Heart right ventricle (tissue), 16 donors: ENCODE measurements at regions of chr11 and their contacts with region 1.

Region 1: GRCh38 chr11:100789500-100789899 is 102.4 kb downstream of the ARHGAP42 start:
- DNase-seq: peak; percentile 25 to 46
- ATAC-seq: peak; percentile 44 to 85 (median 68)
- H3K4me3 ChIP-seq: no peak overlapping the region
- H3K27ac ChIP-seq: peak overlapping the region in 3 of 10 donors; percentile 13 to 41 (median 33)
- H3K4me1 ChIP-seq: peaks cover 0 to 53% (median 36%) of the 10 kb centered on the region in 9 donors
- H3K27me3 ChIP-seq: no peaks in the 10 kb centered on the region
- CTCF ChIP-seq: no peak

Region 2: DNA sequence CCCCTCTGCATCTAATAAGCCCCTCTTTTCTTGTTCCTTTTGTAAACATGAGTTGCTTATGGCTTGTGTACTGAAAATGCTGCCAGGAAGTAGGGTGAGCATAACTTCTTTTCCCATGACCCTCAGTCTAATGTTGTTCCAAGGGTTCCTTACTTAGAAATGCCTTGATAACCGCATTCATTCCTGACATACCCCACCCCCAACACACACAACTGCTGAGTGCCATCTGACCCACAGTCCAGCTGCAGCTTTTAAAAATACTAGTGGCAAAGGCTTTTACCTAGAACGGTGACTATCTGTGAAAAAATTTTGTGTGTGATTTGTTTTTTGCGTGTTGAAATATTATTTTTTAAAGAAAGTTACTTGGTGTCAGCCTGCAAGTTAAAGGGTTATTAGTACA is 49.8 kb before region 1 on chr11:
- intact Hi-C with region 1: loop called in 2 of 10 experiments (anchors 5 to 10 kb)
- DNase-seq: peak in 1 of 2 donors; percentile 54
- ATAC-seq: peak in 7 of 8 donors; percentile 77 to 93 (median 90)
- H3K4me3 ChIP-seq: peak overlapping the region in 1 of 10 donors; percentile 6
- H3K27ac ChIP-seq: peak overlapping the region in 8 of 10 donors; percentile 27 to 83 (median 62)
- H3K4me1 ChIP-seq: peaks cover 7 to 75% (median 48%) of the 10 kb centered on the region in 9 donors
- H3K27me3 ChIP-seq: no peaks in the 10 kb centered on the region
- CTCF ChIP-seq: no peak

Region 3: DNA sequence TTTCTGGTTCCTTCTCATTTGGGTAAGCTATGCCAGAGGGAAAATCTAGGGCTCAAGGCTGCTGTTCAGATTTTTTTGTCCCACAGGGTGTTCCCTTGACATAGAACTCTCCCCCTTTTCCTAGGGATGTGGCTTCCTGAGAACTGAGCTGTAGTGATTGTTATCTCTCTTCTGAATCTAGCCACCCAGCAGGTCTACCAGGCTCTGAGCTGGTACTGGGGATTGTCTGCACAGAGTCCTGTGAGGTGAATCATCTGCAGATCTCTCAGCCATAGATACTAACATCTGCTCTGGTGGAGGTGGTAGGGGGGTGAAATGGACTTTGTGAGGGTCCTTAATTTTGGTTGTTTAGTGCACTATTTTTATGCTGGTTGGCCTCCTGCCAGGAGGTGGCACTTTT is 507.4 kb after region 1 on chr11:
- intact Hi-C with region 1: no loop called
- DNase-seq: no peak
- ATAC-seq: no peak
- H3K4me3 ChIP-seq: no peak overlapping the region
- H3K27ac ChIP-seq: no peak overlapping the region
- H3K4me1 ChIP-seq: no peaks in the 10 kb centered on the region
- H3K27me3 ChIP-seq: no peaks in the 10 kb centered on the region
- CTCF ChIP-seq: no peak